Endothelial cell of umbilical vein (primary cell): ENCODE measurements at regions of chr17 and their contacts with region 1.

Region 1: GRCh38 chr17:38428112-38428642 is at the start of gene ARHGAP23:
- DNase-seq: peak; percentile 52
- H3K4me3 ChIP-seq: peak within 1 kb of the TSS; percentile 63 to 81 (median 70)
- H3K27ac ChIP-seq: peak within 1 kb of the TSS; percentile 70
- H3K4me1 ChIP-seq: peaks cover 53% of the 10 kb centered on the region
- H3K27me3 ChIP-seq: no peaks in the 10 kb centered on the region
- CTCF ChIP-seq: no peak
- POLR2A ChIP-seq: no peak
- total RNA-seq, gene ARHGAP23: 152 and 190 TPM in 2 replicates

Region 2: GRCh38 chr17:37592291-37592690 is 835.9 kb before region 1 on chr17:
- CTCF ChIA-PET with region 1: no interaction called
- POLR2A ChIA-PET with region 1: no interaction called
- dilution Hi-C with region 1: no loop called
- intact Hi-C with region 1: no loop called
- DNase-seq: no peak
- H3K4me3 ChIP-seq: no peak overlapping the region
- H3K27ac ChIP-seq: no peak overlapping the region
- H3K4me1 ChIP-seq: no peaks in the 10 kb centered on the region
- H3K27me3 ChIP-seq: no peaks in the 10 kb centered on the region
- CTCF ChIP-seq: no peak
- POLR2A ChIP-seq: no peak

Region 3: DNA sequence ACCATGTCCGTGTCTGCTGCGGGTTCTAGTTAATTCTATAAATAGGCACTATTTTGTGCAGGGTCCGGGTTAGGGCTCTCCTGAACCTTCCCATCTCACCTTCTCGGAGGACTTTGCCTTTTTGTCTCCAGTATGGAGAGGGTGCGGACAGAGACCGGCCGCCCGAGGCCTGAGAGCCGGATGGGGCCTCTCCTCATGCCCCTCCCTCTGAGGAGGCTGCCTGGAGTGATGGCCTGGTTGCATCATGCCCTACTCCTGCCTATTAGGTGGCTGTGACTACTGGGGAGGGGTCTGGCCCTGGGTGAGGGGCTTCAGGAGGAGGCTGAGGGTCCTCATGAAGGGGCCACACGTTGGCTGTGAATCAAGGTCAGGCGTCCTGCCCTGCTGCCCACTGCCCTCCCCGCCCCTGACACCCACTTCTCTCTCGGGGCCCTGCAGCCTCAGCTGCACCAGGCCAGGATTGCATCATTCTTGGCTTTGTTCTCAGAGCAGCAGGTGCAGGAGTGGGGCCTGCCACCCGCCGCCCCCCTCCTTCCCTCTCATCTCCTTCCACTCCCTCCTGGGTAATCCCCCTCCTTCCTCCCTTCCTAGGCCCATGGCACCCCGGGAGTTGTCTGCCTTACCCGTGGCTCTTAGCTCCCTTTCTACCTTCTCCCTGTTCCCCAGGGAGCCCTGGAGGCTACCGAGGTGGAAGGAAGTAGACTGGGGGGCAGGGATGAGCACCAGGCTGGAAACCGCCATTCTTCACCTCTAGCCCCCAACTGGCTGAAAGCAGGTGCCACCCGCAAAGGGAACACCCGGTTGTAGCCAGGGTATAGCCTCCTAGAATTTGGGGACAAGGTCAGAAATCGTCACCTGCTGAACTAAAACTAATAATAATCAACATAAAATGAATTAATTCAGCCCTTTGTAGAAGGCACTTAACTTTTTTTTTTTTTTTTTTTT is 12.7 kb before region 1 on chr17:
- CTCF ChIA-PET with region 1: interaction called, 13 read pairs
- POLR2A ChIA-PET with region 1: no interaction called
- dilution Hi-C with region 1: no loop called
- intact Hi-C with region 1: no loop called
- DNase-seq: no peak
- H3K4me3 ChIP-seq: no peak overlapping the region
- H3K27ac ChIP-seq: no peak overlapping the region
- H3K4me1 ChIP-seq: no peaks in the 10 kb centered on the region
- H3K27me3 ChIP-seq: peaks cover 20 to 22% of the 10 kb centered on the region in 2 experiments
- CTCF ChIP-seq: no peak
- POLR2A ChIP-seq: no peak

Region 4: DNA sequence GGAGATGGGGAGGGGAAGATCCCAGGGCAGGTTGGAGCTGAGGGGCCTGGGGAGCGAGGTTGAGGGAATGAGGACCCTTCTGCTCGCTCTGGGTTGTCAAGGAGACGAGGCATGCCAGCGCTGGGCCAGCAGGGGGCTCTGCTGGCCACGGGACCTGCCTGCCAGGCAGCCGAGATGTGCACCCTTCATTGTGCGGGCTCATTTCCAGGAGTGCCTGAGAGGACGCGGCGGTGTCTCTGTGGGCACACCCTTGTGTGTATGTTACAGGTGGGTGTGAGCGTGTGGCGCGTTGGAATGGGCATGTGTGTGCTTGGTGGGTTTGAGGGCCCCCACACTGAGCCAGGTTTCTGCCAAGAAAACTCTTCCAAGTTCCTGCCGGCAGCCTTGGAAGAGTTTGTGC is 16.0 kb after region 1 on chr17:
- CTCF ChIA-PET with region 1: interaction called, 35 read pairs
- POLR2A ChIA-PET with region 1: no interaction called
- dilution Hi-C with region 1: no loop called
- intact Hi-C with region 1: loop called (anchors 1 kb)
- DNase-seq: peak; percentile 68
- H3K4me3 ChIP-seq: no peak overlapping the region
- H3K27ac ChIP-seq: no peak overlapping the region
- H3K4me1 ChIP-seq: peaks cover 28% of the 10 kb centered on the region
- H3K27me3 ChIP-seq: no peaks in the 10 kb centered on the region
- CTCF ChIP-seq: peak; percentile 97 to 99
- POLR2A ChIP-seq: no peak

Region 5: GRCh38 chr17:38454516-38454915 is 26.3 kb after region 1 on chr17:
- CTCF ChIA-PET with region 1: interaction called, 20 read pairs
- POLR2A ChIA-PET with region 1: interaction called, 3 read pairs
- dilution Hi-C with region 1: no loop called
- intact Hi-C with region 1: loop called (anchors 1 kb)
- DNase-seq: peak; percentile 80
- H3K4me3 ChIP-seq: peak overlapping the region; percentile 48 to 57 (median 53)
- H3K27ac ChIP-seq: peak overlapping the region; percentile 45
- H3K4me1 ChIP-seq: peaks cover 53% of the 10 kb centered on the region
- H3K27me3 ChIP-seq: no peaks in the 10 kb centered on the region
- CTCF ChIP-seq: no peak
- POLR2A ChIP-seq: peak; percentile 79

Region 6: GRCh38 chr17:38485146-38485468 is 56.9 kb after region 1 on chr17:
- CTCF ChIA-PET with region 1: interaction called, 10 read pairs
- POLR2A ChIA-PET with region 1: no interaction called
- dilution Hi-C with region 1: no loop called
- intact Hi-C with region 1: loop called (anchors 2 kb)
- DNase-seq: no peak
- H3K4me3 ChIP-seq: no peak overlapping the region
- H3K27ac ChIP-seq: no peak overlapping the region
- H3K4me1 ChIP-seq: peaks cover 2% of the 10 kb centered on the region
- H3K27me3 ChIP-seq: no peaks in the 10 kb centered on the region
- CTCF ChIP-seq: no peak
- POLR2A ChIP-seq: no peak

Region 7: DNA sequence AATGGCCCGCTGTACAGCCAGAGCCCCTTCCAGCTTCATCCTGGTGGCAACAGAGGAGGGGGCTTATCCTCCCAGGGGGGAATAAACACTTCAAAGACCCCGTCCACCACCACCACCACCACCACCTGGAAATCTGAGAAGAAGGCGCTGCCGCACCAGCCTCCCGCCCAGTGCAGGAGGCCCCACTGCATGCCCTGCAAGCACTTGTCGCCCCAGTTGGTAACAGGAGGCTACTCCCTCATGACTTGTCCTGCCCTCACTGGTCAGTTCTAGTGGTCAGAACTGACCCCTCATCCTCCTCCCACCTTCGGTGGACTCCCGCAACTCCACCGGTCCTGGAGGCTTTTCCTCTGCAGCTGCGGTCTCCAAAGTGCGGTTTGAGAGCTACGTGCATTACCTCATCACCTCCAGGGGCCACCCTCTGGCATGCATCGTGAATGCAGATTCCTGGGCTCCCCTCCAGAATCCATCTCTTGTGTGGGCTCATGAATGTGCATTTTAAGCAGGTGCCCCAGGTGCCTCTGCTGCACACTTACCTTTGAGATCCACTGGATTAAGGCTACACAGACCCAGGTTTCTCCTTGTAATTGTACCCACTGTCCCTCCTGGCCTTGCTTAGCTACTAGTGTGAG is 105.8 kb after region 1 on chr17:
- CTCF ChIA-PET with region 1: interaction called, 72 read pairs
- POLR2A ChIA-PET with region 1: no interaction called
- dilution Hi-C with region 1: no loop called
- intact Hi-C with region 1: loop called (anchors 1 kb)
- DNase-seq: no peak
- H3K4me3 ChIP-seq: no peak overlapping the region
- H3K27ac ChIP-seq: no peak overlapping the region
- H3K4me1 ChIP-seq: no peaks in the 10 kb centered on the region
- H3K27me3 ChIP-seq: peaks cover 0 to 3% of the 10 kb centered on the region in 2 experiments
- CTCF ChIP-seq: no peak
- POLR2A ChIP-seq: no peak

Region 8: DNA sequence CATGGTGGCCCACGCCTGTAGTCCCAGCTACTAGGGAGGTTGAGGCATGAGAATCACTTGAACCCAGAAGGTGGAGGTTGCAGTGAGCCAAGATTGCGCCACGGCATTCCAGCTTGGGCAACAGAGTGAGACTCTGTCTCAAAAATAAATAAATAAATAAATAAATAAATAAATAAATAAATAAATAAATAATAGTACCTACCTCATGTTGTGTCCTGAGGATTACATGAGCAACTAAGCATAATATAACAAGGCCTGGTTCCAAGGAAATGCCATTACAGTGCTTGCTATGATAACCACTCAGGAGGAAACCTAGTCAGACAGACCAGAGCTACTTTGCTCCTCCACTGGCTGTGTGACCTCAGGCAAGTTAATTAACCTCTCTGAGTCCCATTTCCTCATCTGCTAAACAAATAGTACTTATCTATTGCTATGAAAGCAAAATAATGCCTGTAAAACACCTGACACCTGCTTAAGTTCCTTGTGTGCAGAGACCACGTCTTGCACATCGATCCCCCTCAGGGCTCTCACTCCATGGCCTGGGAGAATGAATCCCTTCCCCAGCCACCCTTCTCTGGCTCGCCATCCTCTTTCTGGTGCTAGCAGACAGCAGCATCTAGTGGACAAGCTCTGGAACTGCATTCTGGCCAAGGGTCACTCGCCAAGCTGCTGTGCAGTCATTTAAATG is 239.1 kb after region 1 on chr17:
- CTCF ChIA-PET with region 1: interaction called, 17 read pairs
- POLR2A ChIA-PET with region 1: no interaction called
- dilution Hi-C with region 1: no loop called
- intact Hi-C with region 1: loop called (anchors 1 kb)
- DNase-seq: peak; percentile 72
- H3K4me3 ChIP-seq: no peak overlapping the region
- H3K27ac ChIP-seq: no peak overlapping the region
- H3K4me1 ChIP-seq: no peaks in the 10 kb centered on the region
- H3K27me3 ChIP-seq: peaks cover 38% of the 10 kb centered on the region in 2 experiments
- CTCF ChIP-seq: peak; percentile 98 to 99
- POLR2A ChIP-seq: no peak